Gastrocnemius medialis (tissue), 4 donors: ENCODE measurements at regions of chr15 and their contacts with region 1.

Region 1: GRCh38 chr15:58227706-58228543 is 89.7 kb downstream of the AQP9 start:
- DNase-seq: peak; percentile 63 to 77
- ATAC-seq: peak; percentile 46 to 59
- H3K4me3 ChIP-seq: no peak overlapping the region
- H3K27ac ChIP-seq: peak overlapping the region; percentile 85 to 92 (median 86)
- H3K4me1 ChIP-seq: peaks cover 27 to 37% of the 10 kb centered on the region in 2 donors
- H3K27me3 ChIP-seq: no peaks in the 10 kb centered on the region
- CTCF ChIP-seq: peak; percentile 78 to 95 (median 87)
- POLR2A ChIP-seq: no peak

Region 2: GRCh38 chr15:58269455-58270414 is 41.8 kb after region 1 on chr15:
- in situ Hi-C with region 1: no loop called
- intact Hi-C with region 1: loop called (anchors 2 kb)
- DNase-seq: peak in 1 of 2 donors; percentile 20
- ATAC-seq: peak; percentile 87 to 89
- H3K4me3 ChIP-seq: no peak overlapping the region
- H3K27ac ChIP-seq: no peak overlapping the region
- H3K4me1 ChIP-seq: no peaks in the 10 kb centered on the region
- H3K27me3 ChIP-seq: no peaks in the 10 kb centered on the region
- CTCF ChIP-seq: peak; percentile 40 to 77 (median 63)
- POLR2A ChIP-seq: no peak

Region 3: GRCh38 chr15:58546635-58547627 is 319.0 kb after region 1 on chr15:
- in situ Hi-C with region 1: loop called in 1 of 4 experiments (anchors 10 kb)
- intact Hi-C with region 1: loop called (anchors 5 kb)
- DNase-seq: peak; percentile 73 to 85
- ATAC-seq: peak; percentile 96 to 97
- H3K4me3 ChIP-seq: no peak overlapping the region
- H3K27ac ChIP-seq: peak overlapping the region; percentile 47 to 67 (median 52)
- H3K4me1 ChIP-seq: peaks cover 22 to 36% of the 10 kb centered on the region in 2 donors
- H3K27me3 ChIP-seq: no peaks in the 10 kb centered on the region
- CTCF ChIP-seq: no peak
- POLR2A ChIP-seq: no peak

Region 4: GRCh38 chr15:58761010-58761388 is 533.1 kb after region 1 on chr15:
- in situ Hi-C with region 1: loop called (anchors 10 to 25 kb)
- intact Hi-C with region 1: no loop called
- DNase-seq: no peak
- ATAC-seq: no peak
- H3K4me3 ChIP-seq: no peak overlapping the region
- H3K27ac ChIP-seq: no peak overlapping the region
- H3K4me1 ChIP-seq: no peaks in the 10 kb centered on the region
- H3K27me3 ChIP-seq: no peaks in the 10 kb centered on the region
- CTCF ChIP-seq: no peak
- POLR2A ChIP-seq: no peak